ENCODE measurements at regions of chr13 and their contacts with region 1.

Region 1: DNA sequence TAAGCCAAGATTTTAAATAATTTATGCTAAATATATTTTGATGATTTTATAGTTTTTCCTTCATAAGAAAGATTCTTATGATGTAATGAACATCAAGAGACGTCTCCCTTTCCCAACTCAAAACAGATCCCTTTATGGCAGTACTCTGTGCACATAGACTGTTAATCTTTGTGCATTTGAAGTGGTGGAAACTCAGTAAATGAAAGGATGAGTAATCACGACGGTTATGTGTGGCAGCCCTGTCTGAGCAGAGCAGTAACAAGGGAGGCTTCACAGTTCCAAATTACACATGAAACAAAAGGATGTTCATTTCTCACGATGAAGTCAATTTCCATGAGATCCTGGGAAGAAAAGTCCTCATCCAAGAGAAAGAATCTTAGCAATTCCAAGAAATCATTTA is 498.1 kb downstream of the KLF5 start:
- DNase-seq: no peak
- ATAC-seq: no peak
- H3K4me3 ChIP-seq: no peak overlapping the region
- H3K27ac ChIP-seq: no peak overlapping the region
- H3K4me1 ChIP-seq: no peaks in the 10 kb centered on the region
- H3K27me3 ChIP-seq: no peaks in the 10 kb centered on the region
- CTCF ChIP-seq: no peak
- EP300 ChIP-seq: no peak
- POLR2A ChIP-seq: no peak
- RAD21 ChIP-seq: no peak

Region 2: GRCh38 chr13:73440296-73440895 is 116.5 kb before region 1 on chr13:
- CTCF ChIA-PET with region 1: no interaction called
- POLR2A ChIA-PET with region 1: no interaction called
- in situ Hi-C with region 1: no loop called
- intact Hi-C with region 1: loop called (anchors 10 kb)
- DNase-seq: no peak
- ATAC-seq: no peak
- H3K4me3 ChIP-seq: no peak overlapping the region
- H3K27ac ChIP-seq: no peak overlapping the region
- H3K4me1 ChIP-seq: no peaks in the 10 kb centered on the region
- H3K27me3 ChIP-seq: no peaks in the 10 kb centered on the region
- CTCF ChIP-seq: no peak
- EP300 ChIP-seq: no peak
- POLR2A ChIP-seq: no peak
- RAD21 ChIP-seq: no peak

Region 3: GRCh38 chr13:73481886-73482445 is 74.9 kb before region 1 on chr13:
- CTCF ChIA-PET with region 1: no interaction called
- POLR2A ChIA-PET with region 1: no interaction called
- in situ Hi-C with region 1: no loop called
- intact Hi-C with region 1: no loop called
- DNase-seq: no peak
- ATAC-seq: no peak
- H3K4me3 ChIP-seq: no peak overlapping the region
- H3K27ac ChIP-seq: no peak overlapping the region
- H3K4me1 ChIP-seq: no peaks in the 10 kb centered on the region
- H3K27me3 ChIP-seq: no peaks in the 10 kb centered on the region
- CTCF ChIP-seq: no peak
- EP300 ChIP-seq: no peak
- POLR2A ChIP-seq: no peak
- RAD21 ChIP-seq: no peak

Region 4: DNA sequence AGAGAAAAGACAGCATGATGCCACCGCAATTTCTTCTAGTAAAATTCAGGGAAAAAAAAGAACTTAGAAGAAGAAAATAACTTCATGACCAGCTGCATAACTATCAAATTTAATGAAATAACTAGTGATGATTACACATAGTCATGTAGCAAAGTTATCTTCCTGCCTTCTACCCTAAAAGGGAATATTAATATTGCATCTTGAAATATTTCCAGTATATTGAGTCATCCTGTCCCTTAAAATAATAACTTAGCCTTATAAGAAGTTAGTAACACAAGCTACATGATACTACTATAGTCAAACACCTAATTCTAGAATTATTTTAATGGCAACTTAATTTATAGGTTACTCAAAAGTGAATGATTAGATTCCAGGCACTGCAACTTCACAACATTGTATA is 288.1 kb after region 1 on chr13:
- CTCF ChIA-PET with region 1: no interaction called
- POLR2A ChIA-PET with region 1: no interaction called
- in situ Hi-C with region 1: no loop called
- intact Hi-C with region 1: no loop called
- DNase-seq: no peak
- ATAC-seq: no peak
- H3K4me3 ChIP-seq: no peak overlapping the region
- H3K27ac ChIP-seq: no peak overlapping the region
- H3K4me1 ChIP-seq: no peaks in the 10 kb centered on the region
- H3K27me3 ChIP-seq: no peaks in the 10 kb centered on the region
- CTCF ChIP-seq: no peak
- EP300 ChIP-seq: no peak
- POLR2A ChIP-seq: no peak
- RAD21 ChIP-seq: no peak